Activated CD4-positive, alpha-beta memory T cell treated with anti-CD3 and anti-CD28 coated beads for 36 hours (primary cell): ENCODE measurements at regions of chr3 and their contacts with region 1.

Region 1: GRCh38 chr3:46538803-46539442 is 27.2 kb downstream of the LRRC2 start:
- DNase-seq: peak; percentile 87
- H3K4me3 Mint-ChIP-seq: peak overlapping the region; percentile 63
- H3K27ac Mint-ChIP-seq: peak overlapping the region; percentile 79
- H3K4me1 Mint-ChIP-seq: peaks cover 57% of the 10 kb centered on the region
- H3K27me3 Mint-ChIP-seq: no peaks in the 10 kb centered on the region

Region 2: DNA sequence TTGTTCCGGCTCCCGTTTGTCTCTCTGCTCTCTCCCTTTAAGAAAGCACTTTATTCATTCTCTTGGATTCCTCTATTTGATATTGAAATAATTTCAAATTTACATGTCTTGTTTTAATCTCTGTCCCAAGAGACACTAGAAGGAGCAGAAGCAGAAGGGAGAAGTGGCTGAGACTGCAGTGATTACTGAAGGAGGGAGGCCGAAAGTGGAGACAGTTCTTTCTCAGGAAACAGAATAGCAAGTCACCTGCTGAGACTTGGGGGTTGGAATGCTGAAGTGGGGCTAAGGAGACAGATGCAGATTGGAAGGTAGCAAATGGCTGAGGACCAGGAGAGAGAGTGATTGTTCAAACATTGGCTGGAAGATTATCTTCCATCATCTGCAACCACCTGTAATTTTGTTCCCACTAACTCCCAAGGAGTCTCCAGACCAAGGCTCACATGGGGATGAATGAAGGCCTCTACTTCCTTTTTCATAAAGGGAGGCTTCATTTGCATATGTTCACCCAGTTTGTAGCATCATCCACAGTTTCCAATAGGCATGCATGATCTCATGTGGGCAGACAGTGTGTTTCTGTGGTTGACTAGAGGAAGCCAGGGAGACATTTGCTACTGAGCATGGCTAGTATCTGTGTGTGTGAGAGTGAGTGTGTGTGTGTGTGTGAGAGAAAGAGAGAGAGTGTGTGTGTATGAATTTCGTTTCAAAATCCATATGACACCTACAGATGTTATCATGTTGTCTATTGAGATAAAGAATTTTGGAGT is 98.2 kb before region 1 on chr3:
- CTCF ChIA-PET with region 1: no interaction called
- POLR2A ChIA-PET with region 1: no interaction called
- intact Hi-C with region 1: loop called (anchors 1 kb)
- DNase-seq: peak; percentile 47
- H3K4me3 Mint-ChIP-seq: no peak overlapping the region
- H3K27ac Mint-ChIP-seq: no peak overlapping the region
- H3K4me1 Mint-ChIP-seq: peaks cover 17% of the 10 kb centered on the region
- H3K27me3 Mint-ChIP-seq: no peaks in the 10 kb centered on the region